GM18951 (cell line): ENCODE measurements at regions of chr1 and their contacts with region 1.

Region 1: GRCh38 chr1:155983191-155984024 is 5.1 kb upstream of the ARHGEF2 start:
- POLR2A ChIP-seq: peak; percentile 41

Region 2: DNA sequence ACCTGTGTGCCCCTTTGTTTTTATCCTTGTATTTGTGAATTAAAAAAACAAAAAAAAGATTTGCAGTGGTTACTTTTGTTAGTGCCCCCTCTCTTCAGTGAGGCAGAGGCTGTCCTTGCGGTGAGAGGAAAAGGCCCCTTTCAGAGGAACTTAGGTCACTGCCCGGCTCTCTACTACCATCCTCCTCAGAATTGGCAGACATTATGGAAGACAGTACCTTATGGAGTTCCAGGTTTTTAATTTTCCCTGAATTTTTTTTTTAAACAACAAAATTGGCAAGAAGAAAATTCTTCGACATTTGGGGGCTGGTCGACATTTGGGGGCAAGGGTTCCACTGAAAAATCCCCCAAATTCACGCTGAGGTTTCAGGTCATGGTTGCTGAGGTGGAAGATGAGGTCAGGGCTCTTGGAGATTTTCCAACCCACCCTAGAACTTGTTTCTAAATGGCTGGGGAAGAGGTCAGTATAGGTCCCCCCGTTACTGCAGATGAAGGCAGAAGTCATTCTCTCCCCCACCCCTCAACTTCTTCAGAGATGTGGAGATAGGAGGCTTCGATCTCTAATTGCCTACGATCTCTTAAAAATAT is 36.7 kb before region 1 on chr1:
- in situ Hi-C with region 1: loop called (anchors 5 kb)
- POLR2A ChIP-seq: no peak